T-cell (primary cell): ENCODE measurements at regions of chr1 and their contacts with region 1.

Region 1: GRCh38 chr1:147599362-147600118 is 58.2 kb downstream of the BCL9 start:
- DNase-seq: peak; percentile 89 to 98 (median 96)
- ATAC-seq: peak; percentile 81 to 87 (median 84)
- H3K4me3 ChIP-seq: peak overlapping the region; percentile 82 to 87
- H3K4me3 Mint-ChIP-seq: peak overlapping the region; percentile 84 to 94 (median 87)
- H3K27ac ChIP-seq: peak overlapping the region; percentile 58
- H3K27ac Mint-ChIP-seq: peak overlapping the region; percentile 44 to 76
- H3K4me1 ChIP-seq: peaks cover 12 to 20% of the 10 kb centered on the region in 2 experiments
- H3K4me1 Mint-ChIP-seq: peaks cover 28 to 34% (median 34%) of the 10 kb centered on the region in 3 donors
- H3K27me3 ChIP-seq: peaks cover 0 to 10% of the 10 kb centered on the region in 2 experiments
- H3K27me3 Mint-ChIP-seq: no peaks in the 10 kb centered on the region

Region 2: GRCh38 chr1:147534386-147534785 is 65.2 kb before region 1 on chr1:
- CTCF ChIA-PET with region 1: no interaction called
- POLR2A ChIA-PET with region 1: interaction called in 1 of 2 experiments, 11 read pairs
- DNase-seq: no peak
- ATAC-seq: no peak
- H3K4me3 ChIP-seq: no peak overlapping the region
- H3K4me3 Mint-ChIP-seq: no peak overlapping the region
- H3K27ac ChIP-seq: no peak overlapping the region
- H3K27ac Mint-ChIP-seq: no peak overlapping the region
- H3K4me1 ChIP-seq: no peaks in the 10 kb centered on the region
- H3K4me1 Mint-ChIP-seq: no peaks in the 10 kb centered on the region
- H3K27me3 ChIP-seq: no peaks in the 10 kb centered on the region
- H3K27me3 Mint-ChIP-seq: peaks cover 0 to 4% of the 10 kb centered on the region in 2 donors

Region 3: DNA sequence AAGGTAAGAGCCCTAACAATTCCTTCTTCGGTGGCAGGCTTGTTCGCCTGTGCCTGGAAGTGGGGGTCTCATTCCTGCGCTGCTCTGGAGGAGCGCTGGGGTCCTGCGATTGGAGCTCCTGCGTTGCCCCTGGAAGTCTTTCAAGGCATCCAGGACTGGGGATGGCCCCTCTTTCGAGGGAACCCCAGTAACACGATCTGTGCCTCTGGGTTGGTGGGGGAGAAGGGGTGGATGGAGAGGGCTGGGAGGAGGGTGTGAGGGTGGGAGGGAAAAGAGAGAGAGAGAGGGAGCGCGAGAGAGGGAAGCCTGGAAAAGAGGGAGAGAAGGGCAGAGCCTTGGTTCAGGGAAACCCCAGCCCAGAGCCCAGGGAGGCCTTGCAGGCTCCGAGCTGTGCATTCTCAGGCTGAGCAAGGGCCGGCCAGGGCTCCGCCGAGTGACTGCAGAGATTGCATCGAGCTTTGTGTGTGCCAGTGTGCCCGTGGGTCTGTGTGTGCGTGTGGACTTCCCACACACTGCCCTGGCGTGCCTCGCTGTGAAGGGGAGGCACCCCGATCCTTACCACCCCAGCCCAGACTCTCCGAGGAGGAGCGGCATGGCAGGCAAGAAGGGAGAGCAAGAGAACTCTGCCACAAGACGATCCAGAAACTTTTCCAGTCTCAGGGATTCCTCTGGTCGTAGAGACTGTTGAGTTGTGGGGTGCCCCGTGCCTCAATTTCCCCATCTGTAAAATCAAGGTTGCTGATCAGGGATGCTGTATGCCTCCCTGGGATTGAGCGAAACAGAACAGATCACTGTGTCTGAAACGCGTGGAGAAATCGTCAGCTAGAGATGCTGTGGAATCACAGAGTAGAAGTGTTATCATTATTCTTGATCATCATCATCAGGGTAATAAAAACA is 57.6 kb before region 1 on chr1:
- CTCF ChIA-PET with region 1: interaction called in 1 of 2 experiments, 28 read pairs
- POLR2A ChIA-PET with region 1: interaction called, 3 to 4 read pairs
- DNase-seq: peak in 14 of 35 experiments; percentile 3 to 32 (median 16)
- ATAC-seq: no peak
- H3K4me3 ChIP-seq: peak overlapping the region; percentile 55 to 84
- H3K4me3 Mint-ChIP-seq: no peak overlapping the region
- H3K27ac ChIP-seq: peak overlapping the region; percentile 75
- H3K27ac Mint-ChIP-seq: no peak overlapping the region
- H3K4me1 ChIP-seq: peaks cover 42 to 51% of the 10 kb centered on the region in 2 experiments
- H3K4me1 Mint-ChIP-seq: peaks cover 7 to 49% (median 8%) of the 10 kb centered on the region in 3 donors
- H3K27me3 ChIP-seq: no peaks in the 10 kb centered on the region
- H3K27me3 Mint-ChIP-seq: no peaks in the 10 kb centered on the region

Region 4: DNA sequence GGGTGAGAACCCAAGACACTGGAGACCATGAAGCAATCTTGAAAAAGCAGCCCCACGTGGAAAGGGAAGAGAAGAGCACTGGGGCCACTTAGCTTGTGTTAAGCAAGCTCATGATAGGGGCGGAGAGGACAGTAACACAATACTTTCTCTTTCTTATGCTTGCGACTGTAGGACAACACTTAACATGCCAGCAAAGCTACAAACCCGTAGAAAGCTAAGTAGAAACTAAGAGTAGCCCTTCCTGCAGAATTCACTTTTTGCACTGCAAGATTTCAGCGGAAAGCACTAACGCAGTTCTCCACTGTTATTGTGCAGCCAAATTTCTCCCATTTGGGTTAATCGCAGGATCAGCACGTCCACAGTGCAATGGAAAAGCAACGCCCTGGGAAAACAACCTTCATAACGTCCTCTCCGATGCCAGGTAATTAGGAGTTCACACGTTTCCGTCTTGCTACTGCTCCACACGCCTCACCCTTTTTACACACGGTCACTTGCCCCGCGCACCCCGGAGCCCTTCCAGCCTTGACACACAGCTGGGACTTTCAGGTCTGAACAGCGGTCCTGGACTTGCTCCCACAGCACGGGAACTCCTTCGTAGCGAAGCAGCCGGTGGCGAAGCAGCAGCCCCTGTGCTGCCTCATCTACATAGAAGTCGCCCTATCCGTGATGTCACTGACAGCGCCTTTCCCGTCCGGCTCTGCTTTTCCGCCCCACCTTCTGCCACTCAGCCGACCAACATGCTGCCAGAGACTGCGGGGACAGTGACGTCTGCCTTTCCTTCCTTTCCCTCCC is 735.0 kb after region 1 on chr1:
- CTCF ChIA-PET with region 1: no interaction called
- POLR2A ChIA-PET with region 1: no interaction called
- DNase-seq: peak; percentile 42 to 81 (median 60)
- ATAC-seq: peak; percentile 76 to 82 (median 80)
- H3K4me3 ChIP-seq: peak overlapping the region; percentile 72 to 77
- H3K4me3 Mint-ChIP-seq: peak overlapping the region; percentile 95 to 98 (median 96)
- H3K27ac ChIP-seq: peak overlapping the region; percentile 87
- H3K27ac Mint-ChIP-seq: peak overlapping the region; percentile 99 to 100
- H3K4me1 ChIP-seq: peaks cover 11 to 21% of the 10 kb centered on the region in 2 experiments
- H3K4me1 Mint-ChIP-seq: peaks cover 34 to 39% (median 35%) of the 10 kb centered on the region in 3 donors
- H3K27me3 ChIP-seq: peaks cover 0 to 11% of the 10 kb centered on the region in 2 experiments
- H3K27me3 Mint-ChIP-seq: peaks cover 7 to 14% of the 10 kb centered on the region in 2 donors